ENCODE measurements at regions of chr5 and their contacts with region 1.

Region 1: GRCh38 chr5:173887610-173888472 is at the start of gene CPEB4:
- DNase-seq: peak in 1 of 2 donors; percentile 100
- H3K4me3 ChIP-seq: peak within 1 kb of the TSS; percentile 66 to 86
- H3K27ac ChIP-seq: peak within 1 kb of the TSS; percentile 87
- H3K4me1 ChIP-seq: peaks cover 37% of the 10 kb centered on the region
- H3K27me3 ChIP-seq: no peaks in the 10 kb centered on the region
- CTCF ChIP-seq: no peak
- POLR2A ChIP-seq: peak; percentile 87 to 90
- total RNA-seq, gene CPEB4: 31.9 TPM

Region 2: GRCh38 chr5:173625696-173626504 is 261.9 kb before region 1 on chr5:
- intact Hi-C with region 1: no loop called
- DNase-seq: no peak
- H3K4me3 ChIP-seq: no peak overlapping the region
- H3K27ac ChIP-seq: no peak overlapping the region
- H3K4me1 ChIP-seq: no peaks in the 10 kb centered on the region
- H3K27me3 ChIP-seq: no peaks in the 10 kb centered on the region
- CTCF ChIP-seq: no peak
- POLR2A ChIP-seq: no peak

Region 3: DNA sequence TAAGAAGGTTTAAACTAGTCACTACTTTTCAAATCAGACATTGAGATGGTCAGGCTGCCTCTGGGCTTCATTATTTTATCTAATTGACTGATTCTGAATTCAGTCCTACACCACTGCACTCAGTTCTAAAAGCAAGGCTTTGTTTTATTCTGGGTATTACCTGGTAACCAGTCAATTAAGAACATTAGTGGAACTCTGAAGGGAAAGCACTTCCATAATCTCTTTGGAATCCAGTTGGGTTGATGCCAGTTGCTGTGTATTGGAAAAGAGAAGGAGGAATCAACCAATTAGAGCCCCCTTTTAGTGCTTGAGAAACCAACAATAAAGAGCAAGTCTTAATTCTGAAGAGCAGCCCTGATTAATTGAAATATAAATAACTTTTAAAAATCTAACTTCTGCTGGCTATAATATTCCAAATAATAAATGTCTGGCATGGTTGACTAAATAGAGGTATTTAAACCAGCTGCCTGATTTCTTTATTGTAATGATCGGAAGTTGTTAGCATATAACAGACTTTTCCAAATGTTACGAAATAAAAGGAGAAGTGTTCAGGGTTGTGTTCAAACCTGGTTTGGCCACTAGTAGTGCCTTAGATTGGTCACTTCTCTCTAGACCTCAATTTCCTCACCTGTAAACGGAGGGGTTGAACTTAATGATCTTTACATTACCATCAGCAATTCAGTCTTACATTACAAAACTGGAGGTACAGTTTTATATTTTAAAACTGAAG is 32.3 kb after region 1 on chr5:
- intact Hi-C with region 1: loop called (anchors 5 kb)
- DNase-seq: no peak
- H3K4me3 ChIP-seq: no peak overlapping the region
- H3K27ac ChIP-seq: peak overlapping the region; percentile 30
- H3K4me1 ChIP-seq: peaks cover 67% of the 10 kb centered on the region
- H3K27me3 ChIP-seq: no peaks in the 10 kb centered on the region
- CTCF ChIP-seq: no peak
- POLR2A ChIP-seq: no peak

Region 4: DNA sequence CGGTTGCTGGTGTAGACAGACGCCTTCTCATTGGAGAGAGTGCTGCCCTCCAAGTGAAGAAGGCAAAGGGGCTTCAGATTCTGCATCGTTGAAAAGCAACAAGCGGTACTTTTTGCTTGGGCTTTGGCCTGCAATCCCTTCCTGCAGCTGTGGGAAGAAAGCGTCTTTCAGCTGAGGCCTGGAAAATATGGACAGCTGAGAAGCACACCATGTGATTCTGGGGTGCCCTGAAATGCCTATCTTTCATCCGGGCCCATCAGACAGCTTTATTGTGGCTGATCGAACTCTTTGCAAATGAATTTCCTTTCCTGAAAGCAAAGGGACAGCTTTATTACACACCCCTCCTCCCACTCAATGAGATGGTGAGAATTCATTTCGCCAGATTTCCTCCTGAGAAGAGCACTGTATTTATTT is 231.6 kb after region 1 on chr5:
- intact Hi-C with region 1: no loop called
- DNase-seq: no peak
- H3K4me3 ChIP-seq: no peak overlapping the region
- H3K27ac ChIP-seq: no peak overlapping the region
- H3K4me1 ChIP-seq: no peaks in the 10 kb centered on the region
- H3K27me3 ChIP-seq: no peaks in the 10 kb centered on the region
- CTCF ChIP-seq: no peak
- POLR2A ChIP-seq: no peak

Region 5: DNA sequence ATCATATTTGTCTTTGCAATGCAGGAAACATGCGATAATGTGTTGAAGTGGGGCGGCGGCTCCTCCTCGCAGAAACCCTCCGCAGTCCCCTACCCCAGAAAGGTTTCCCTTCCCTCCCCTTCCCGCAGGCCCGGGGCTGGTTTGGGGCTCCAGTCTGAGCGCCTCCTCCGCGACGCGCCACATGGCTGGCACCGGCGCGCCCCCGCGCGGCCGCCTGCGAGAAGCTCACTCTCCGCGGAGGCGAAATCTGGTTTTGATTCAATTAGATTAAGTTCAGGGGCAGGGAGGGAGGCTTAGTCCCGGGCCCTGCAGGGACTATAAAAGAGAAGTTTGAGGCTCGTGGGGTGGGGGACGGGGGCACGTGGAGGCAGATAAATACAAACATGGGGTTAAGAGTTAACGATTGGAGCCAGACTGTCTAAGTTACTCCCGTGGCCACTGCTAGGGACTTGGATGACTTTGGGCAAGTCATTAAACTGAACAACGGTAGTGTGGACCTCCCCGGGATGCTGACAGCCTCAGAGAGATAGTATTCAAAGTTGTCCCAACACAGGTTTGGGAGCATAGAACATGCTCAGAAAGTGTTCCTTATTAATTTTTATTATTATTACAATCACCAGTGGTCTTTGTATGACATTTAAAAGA is 906.0 kb after region 1 on chr5:
- intact Hi-C with region 1: no loop called
- DNase-seq: no peak
- H3K4me3 ChIP-seq: no peak overlapping the region
- H3K27ac ChIP-seq: no peak overlapping the region
- H3K4me1 ChIP-seq: no peaks in the 10 kb centered on the region
- H3K27me3 ChIP-seq: no peaks in the 10 kb centered on the region
- CTCF ChIP-seq: peak; percentile 16 to 76 (median 52)
- POLR2A ChIP-seq: no peak